Dendritic cell treated with granulocyte-macrophage colony-stimulating factor and Interleukin-4, amounts not matched to agents 40 ng/mL and 50 ng/mL, for 4 days (primary cell): ENCODE measurements at regions of chr1 and their contacts with region 1.

Region 1: GRCh38 chr1:114033216-114033706 is 54.0 kb downstream of the OLFML3 start:
- H3K4me3 Mint-ChIP-seq: no peak overlapping the region
- H3K27ac Mint-ChIP-seq: no peak overlapping the region
- H3K4me1 Mint-ChIP-seq: peaks cover 16% of the 10 kb centered on the region
- H3K27me3 Mint-ChIP-seq: no peaks in the 10 kb centered on the region

Region 2: DNA sequence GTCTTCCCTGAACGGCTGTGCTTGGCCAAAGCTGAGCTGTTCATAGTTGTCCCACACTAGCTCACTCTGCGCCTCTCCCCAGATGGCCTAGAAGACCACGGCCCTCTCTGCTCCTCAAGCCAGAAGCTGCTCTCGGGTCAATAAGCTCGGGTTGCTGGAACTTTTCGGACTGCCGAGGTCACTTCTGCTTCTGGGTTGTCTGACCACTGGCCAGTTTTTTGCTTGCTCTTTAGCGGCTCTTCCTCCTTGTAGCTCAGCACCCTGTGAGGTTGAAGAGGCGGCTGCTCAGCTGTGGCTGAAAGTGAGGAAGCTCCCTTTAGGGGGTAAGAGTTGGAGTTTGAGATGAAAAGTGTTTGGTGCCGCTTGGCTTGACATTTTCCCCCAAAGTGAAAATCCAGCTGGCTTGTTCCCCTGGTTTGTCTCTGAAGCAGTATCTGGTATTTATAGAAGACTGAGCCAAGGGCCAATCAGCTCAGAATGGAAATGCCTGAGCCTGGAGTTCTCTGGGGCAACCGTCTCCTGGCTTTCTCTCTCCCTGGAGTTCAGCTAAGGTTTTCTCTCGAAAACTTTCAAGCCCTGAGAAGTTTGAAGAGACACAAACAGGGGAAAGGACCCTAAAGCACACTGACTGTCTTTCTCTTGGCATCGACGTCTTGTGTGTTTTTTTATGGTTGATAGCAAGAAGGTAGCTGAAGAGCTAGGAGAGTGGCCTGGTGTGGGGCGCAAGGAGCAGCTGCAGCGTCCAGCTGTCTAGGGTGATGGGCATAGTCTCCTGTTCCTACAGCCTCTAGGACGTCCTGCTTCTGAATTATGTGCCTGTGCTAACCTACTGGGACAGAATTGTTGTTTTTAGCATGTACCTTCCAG is 48.4 kb after region 1 on chr1:
- intact Hi-C with region 1: loop called (anchors 10 kb)
- H3K4me3 Mint-ChIP-seq: no peak overlapping the region
- H3K27ac Mint-ChIP-seq: peak overlapping the region; percentile 68
- H3K4me1 Mint-ChIP-seq: peaks cover 50% of the 10 kb centered on the region
- H3K27me3 Mint-ChIP-seq: no peaks in the 10 kb centered on the region

Region 3: GRCh38 chr1:114130846-114131525 is 97.7 kb after region 1 on chr1:
- intact Hi-C with region 1: no loop called
- H3K4me3 Mint-ChIP-seq: no peak overlapping the region
- H3K27ac Mint-ChIP-seq: peak overlapping the region; percentile 19
- H3K4me1 Mint-ChIP-seq: peaks cover 72% of the 10 kb centered on the region
- H3K27me3 Mint-ChIP-seq: peaks cover 9% of the 10 kb centered on the region